Sigmoid colon (tissue), 7 donors: ENCODE measurements at regions of chr20 and their contacts with region 1.

Region 1: DNA sequence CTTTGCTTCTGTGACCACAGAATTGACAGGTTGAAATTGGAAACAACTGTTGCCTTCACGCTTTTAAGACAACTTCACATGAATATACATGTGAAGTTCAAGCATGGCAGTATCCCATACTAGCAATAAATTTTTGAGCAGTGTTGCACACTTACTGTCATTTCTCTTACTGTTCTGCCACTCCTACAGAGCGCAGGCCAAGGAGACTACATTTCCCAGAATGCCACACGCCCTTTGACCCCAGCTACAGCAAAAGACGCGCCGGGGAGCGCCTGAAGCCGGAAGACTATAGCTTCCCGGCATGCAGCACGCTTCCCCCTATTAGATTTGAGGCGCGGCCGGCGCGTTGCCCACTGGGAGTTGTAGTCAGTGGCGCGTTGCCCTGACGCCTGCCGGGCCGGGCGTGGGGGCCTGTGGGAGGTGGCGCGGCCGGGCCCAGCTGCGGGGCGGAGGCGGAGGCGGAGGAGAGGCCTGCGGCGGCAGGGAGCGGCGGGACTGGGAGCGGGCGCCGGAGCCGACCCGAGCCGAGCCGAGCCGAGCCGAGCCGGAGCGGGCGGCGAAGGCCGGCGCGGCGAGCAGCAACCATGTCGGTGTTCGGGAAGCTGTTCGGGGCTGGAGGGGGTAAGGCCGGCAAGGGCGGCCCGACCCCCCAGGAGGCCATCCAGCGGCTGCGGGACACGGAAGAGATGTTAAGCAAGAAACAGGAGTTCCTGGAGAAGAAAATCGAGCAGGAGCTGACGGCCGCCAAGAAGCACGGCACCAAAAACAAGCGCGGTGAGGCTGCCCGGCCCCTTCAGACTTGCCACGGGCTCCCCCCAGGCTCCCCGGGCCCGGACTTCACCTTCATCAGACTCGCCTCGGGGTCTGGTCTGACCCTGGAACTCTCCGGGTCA is at the start of gene CHMP4B:
- DNase-seq: peak; percentile 100
- H3K4me3 ChIP-seq: peak within 1 kb of the TSS; percentile 89 to 92 (median 90)
- H3K27ac ChIP-seq: peak within 1 kb of the TSS; percentile 93 to 99 (median 96)
- H3K4me1 ChIP-seq: peaks cover 0 to 42% (median 35%) of the 10 kb centered on the region in 4 donors
- H3K27me3 ChIP-seq: no peaks in the 10 kb centered on the region
- CTCF ChIP-seq: no peak
- EP300 ChIP-seq: no peak
- POLR2A ChIP-seq: peak; percentile 19 to 49
- total RNA-seq, gene CHMP4B: 102 to 115 (median 108) TPM

Region 2: DNA sequence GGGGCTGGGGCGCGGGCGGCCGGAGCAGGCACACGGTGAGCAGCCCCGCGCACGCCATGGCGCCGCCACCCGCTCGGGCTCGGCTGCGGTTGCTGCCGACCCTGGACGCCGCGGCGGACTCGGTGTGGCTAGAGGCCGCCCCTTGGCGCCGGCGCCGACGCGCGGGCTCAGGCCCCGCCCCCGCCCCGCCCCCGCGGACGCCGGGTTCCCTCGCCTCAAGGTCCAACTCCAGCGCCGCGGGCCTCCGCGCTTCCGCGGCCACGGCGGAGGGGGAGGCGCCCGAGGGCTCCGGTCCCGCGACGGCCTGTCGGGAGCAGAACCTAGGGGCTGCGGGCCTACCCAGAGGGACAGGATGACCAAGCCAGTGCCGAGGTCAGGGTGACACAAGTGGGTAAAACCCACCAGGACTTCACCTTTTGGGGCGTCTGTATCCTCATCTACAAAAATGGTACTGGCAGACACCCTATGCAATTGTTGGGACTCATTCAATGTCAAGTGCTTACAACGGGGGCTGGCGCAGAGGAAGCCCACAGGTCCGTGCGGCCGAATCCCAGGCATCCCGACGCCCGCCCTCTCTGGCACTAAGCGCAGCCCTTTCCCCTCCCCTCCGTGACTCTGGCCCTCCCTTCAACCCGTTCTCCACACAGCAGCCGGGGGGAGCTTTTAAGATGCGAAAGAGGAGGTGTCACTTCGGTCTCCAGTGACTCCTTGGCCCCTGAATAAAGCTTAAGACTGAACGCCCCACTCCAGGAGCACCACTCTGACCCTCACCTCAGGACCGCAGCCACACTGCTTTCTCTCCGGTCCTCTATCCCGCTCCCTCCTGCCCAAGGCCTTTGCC is 136.6 kb before region 1 on chr20 and contains the start of gene NECAB3:
- intact Hi-C with region 1: loop called (anchors 5 kb)
- DNase-seq: peak; percentile 94
- H3K4me3 ChIP-seq: peak within 1 kb of the TSS; percentile 55 to 83 (median 74)
- H3K27ac ChIP-seq: peak within 1 kb of the TSS; percentile 89 to 96 (median 94)
- H3K4me1 ChIP-seq: peaks cover 0 to 40% (median 39%) of the 10 kb centered on the region in 4 donors
- H3K27me3 ChIP-seq: no peaks in the 10 kb centered on the region
- CTCF ChIP-seq: no peak
- EP300 ChIP-seq: no peak
- POLR2A ChIP-seq: peak in 1 of 2 donors; percentile 17
- total RNA-seq, gene NECAB3: 44.6 to 50.1 (median 48.0) TPM

Region 3: GRCh38 chr20:33689973-33690372 is 121.2 kb before region 1 on chr20:
- intact Hi-C with region 1: no loop called
- DNase-seq: no peak
- H3K4me3 ChIP-seq: no peak overlapping the region
- H3K27ac ChIP-seq: no peak overlapping the region
- H3K4me1 ChIP-seq: peaks cover 0 to 27% (median 26%) of the 10 kb centered on the region in 4 donors
- H3K27me3 ChIP-seq: no peaks in the 10 kb centered on the region
- CTCF ChIP-seq: no peak
- EP300 ChIP-seq: no peak
- POLR2A ChIP-seq: no peak

Region 4: DNA sequence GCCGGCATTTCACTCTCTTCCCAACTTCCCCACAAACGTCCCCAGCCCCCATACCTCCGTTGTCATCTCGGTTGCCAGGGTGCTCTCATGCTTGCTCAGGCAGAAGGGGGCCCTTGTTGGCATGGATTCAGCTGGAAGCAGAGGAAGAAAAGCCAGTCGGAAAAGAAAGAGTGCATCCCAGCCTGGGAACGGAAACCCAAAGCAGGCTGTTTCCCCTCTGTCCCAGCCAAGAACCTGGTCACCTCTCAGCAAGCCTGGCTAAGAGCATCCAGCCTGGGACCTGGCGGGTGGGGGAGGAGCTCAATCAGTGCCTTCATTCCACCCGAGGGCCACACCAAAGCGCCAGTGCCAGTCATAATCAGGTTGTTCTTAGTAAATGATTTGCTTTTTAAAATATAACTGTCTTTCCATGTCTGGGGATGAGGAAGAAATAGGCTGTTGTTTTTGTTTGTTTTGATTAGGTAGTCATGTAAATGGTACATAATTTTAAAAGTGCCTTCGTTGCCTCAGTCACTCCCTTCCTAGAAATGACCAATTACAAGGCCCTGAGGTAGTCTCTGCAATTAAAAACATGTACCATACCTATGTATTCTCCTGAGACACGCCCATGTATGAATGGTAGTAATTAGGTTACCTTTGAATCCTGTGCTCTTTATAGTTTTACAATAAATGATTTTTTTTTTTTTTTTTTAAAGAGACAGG is 21.1 kb after region 1 on chr20:
- intact Hi-C with region 1: no loop called
- DNase-seq: no peak
- H3K4me3 ChIP-seq: no peak overlapping the region
- H3K27ac ChIP-seq: peak overlapping the region in 3 of 4 donors; percentile 53 to 79 (median 71)
- H3K4me1 ChIP-seq: peaks cover 0 to 96% (median 87%) of the 10 kb centered on the region in 4 donors
- H3K27me3 ChIP-seq: no peaks in the 10 kb centered on the region
- CTCF ChIP-seq: no peak
- EP300 ChIP-seq: no peak
- POLR2A ChIP-seq: no peak